Activated CD8-positive, alpha-beta T cell treated with anti-CD3 and anti-CD28 coated beads for 36 hours (primary cell): ENCODE measurements at regions of chr17 and their contacts with region 1.

Region 1: GRCh38 chr17:64648234-64648633 is 13.9 kb downstream of the SMURF2 start:
- DNase-seq: no peak
- ATAC-seq: no peak
- H3K4me3 Mint-ChIP-seq: no peak overlapping the region
- H3K27ac Mint-ChIP-seq: peak overlapping the region; percentile 75
- H3K4me1 Mint-ChIP-seq: peaks cover 42% of the 10 kb centered on the region
- H3K27me3 Mint-ChIP-seq: no peaks in the 10 kb centered on the region
- CTCF ChIP-seq: no peak

Region 2: DNA sequence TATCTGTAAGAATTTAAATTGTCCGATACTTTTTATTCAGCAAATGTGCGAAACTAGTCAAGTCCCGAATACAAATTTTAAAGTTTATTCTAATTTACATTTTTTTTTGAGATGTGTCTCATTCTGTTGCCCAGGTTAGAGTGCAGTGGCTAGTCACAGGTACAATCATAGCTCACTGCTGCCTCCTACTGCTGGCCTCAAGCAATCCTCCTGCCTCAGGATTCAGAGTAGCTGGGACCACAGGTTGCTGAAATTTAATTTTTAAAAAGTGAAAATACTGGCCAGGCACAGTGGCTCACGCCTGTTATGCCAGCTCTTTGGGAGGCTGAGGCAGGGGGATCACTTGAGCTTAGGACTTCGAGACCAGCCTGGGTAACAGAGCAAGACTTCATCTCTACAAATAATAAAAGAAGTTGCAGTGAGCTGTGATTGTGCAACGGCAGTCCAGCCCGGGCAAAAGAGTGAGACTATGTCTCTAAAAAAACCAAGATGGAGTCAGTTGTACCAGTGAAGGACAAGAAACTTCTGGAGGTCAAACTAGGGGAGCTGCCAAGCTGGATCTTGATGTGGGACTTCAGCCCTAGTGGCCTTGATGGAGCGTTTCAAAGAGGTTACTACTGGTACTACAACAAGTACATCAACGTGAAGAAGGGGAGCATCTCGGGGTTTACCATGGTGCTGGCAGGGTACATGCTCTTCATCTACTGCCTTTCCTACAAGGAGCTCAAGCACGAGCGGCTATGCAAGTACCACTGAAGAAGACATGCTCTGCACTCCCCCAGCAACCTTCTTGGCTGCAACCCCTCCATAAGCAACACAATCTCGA is 157.0 kb before region 1 on chr17:
- CTCF ChIA-PET with region 1: interaction called, 33 read pairs
- POLR2A ChIA-PET with region 1: interaction called, 3 read pairs
- intact Hi-C with region 1: no loop called
- DNase-seq: peak; percentile 72
- ATAC-seq: peak; percentile 82
- H3K4me3 Mint-ChIP-seq: no peak overlapping the region
- H3K27ac Mint-ChIP-seq: no peak overlapping the region
- H3K4me1 Mint-ChIP-seq: peaks cover 25% of the 10 kb centered on the region
- H3K27me3 Mint-ChIP-seq: no peaks in the 10 kb centered on the region
- CTCF ChIP-seq: peak; percentile 74

Region 3: GRCh38 chr17:64506576-64507477 is 141.4 kb before region 1 on chr17 and contains the start of gene CEP95:
- CTCF ChIA-PET with region 1: interaction called, 9 read pairs
- POLR2A ChIA-PET with region 1: interaction called, 35 read pairs
- intact Hi-C with region 1: no loop called
- DNase-seq: peak; percentile 98
- ATAC-seq: peak; percentile 70
- H3K4me3 Mint-ChIP-seq: peak within 1 kb of the TSS; percentile 91
- H3K27ac Mint-ChIP-seq: peak within 1 kb of the TSS; percentile 99
- H3K4me1 Mint-ChIP-seq: peaks cover 53% of the 10 kb centered on the region
- H3K27me3 Mint-ChIP-seq: no peaks in the 10 kb centered on the region
- CTCF ChIP-seq: no peak
- total RNA-seq, gene CEP95: 45.2 to 45.7 TPM

Region 4: GRCh38 chr17:64565563-64565962 is 82.7 kb before region 1 on chr17:
- CTCF ChIA-PET with region 1: interaction called, 24 read pairs
- POLR2A ChIA-PET with region 1: no interaction called
- intact Hi-C with region 1: loop called (anchors 10 kb)
- DNase-seq: no peak
- ATAC-seq: no peak
- H3K4me3 Mint-ChIP-seq: no peak overlapping the region
- H3K27ac Mint-ChIP-seq: no peak overlapping the region
- H3K4me1 Mint-ChIP-seq: peaks cover 3% of the 10 kb centered on the region
- H3K27me3 Mint-ChIP-seq: no peaks in the 10 kb centered on the region
- CTCF ChIP-seq: no peak

Region 5: GRCh38 chr17:64572638-64573154 is 75.5 kb before region 1 on chr17:
- CTCF ChIA-PET with region 1: interaction called, 24 read pairs
- POLR2A ChIA-PET with region 1: no interaction called
- intact Hi-C with region 1: loop called (anchors 10 kb)
- DNase-seq: peak; percentile 14
- ATAC-seq: peak; percentile 92
- H3K4me3 Mint-ChIP-seq: no peak overlapping the region
- H3K27ac Mint-ChIP-seq: peak overlapping the region; percentile 81
- H3K4me1 Mint-ChIP-seq: peaks cover 11% of the 10 kb centered on the region
- H3K27me3 Mint-ChIP-seq: no peaks in the 10 kb centered on the region
- CTCF ChIP-seq: no peak

Region 6: GRCh38 chr17:64599187-64599676 is 49.0 kb before region 1 on chr17:
- CTCF ChIA-PET with region 1: interaction called, 36 read pairs
- POLR2A ChIA-PET with region 1: interaction called, 3 read pairs
- intact Hi-C with region 1: no loop called
- DNase-seq: peak; percentile 75
- ATAC-seq: peak; percentile 99
- H3K4me3 Mint-ChIP-seq: peak overlapping the region; percentile 73
- H3K27ac Mint-ChIP-seq: peak overlapping the region; percentile 87
- H3K4me1 Mint-ChIP-seq: peaks cover 43% of the 10 kb centered on the region
- H3K27me3 Mint-ChIP-seq: no peaks in the 10 kb centered on the region
- CTCF ChIP-seq: no peak

Region 7: DNA sequence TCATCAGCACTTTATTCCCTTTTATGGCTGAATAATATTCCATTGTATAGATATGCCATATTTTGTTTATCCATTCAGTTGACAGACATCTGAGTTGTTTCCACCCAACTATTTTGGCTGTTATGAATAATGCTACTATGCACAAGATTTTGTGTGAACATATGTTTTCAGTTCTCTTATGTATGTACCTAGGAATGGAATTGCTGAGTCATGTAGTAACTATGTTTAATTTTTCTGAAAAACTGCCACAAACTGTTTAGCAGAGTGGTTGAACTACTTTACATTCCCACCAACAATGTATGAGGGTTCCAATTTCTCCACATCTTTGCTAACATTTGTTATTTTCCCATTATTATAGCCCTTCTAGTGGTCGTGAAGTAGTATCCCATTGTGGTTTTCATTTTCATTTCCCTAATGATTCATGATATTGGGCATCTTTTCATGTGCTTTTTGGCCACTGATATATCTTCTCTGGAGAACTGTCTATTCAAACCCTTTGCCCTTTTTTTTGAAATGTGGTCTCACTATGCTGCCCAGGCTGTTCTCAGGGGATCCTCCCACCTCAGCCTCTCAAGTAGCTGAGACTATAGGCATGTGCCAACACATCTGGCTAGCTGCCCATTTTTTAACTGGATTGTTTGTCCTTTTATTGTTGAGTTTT is 12.5 kb before region 1 on chr17:
- CTCF ChIA-PET with region 1: interaction called, 20 read pairs
- POLR2A ChIA-PET with region 1: interaction called, 4 read pairs
- intact Hi-C with region 1: no loop called
- DNase-seq: peak; percentile 45
- ATAC-seq: peak; percentile 69
- H3K4me3 Mint-ChIP-seq: peak overlapping the region; percentile 5
- H3K27ac Mint-ChIP-seq: peak overlapping the region; percentile 90
- H3K4me1 Mint-ChIP-seq: peaks cover 54% of the 10 kb centered on the region
- H3K27me3 Mint-ChIP-seq: no peaks in the 10 kb centered on the region
- CTCF ChIP-seq: no peak

Region 8: GRCh38 chr17:64682261-64683181 is 34.3 kb after region 1 on chr17:
- CTCF ChIA-PET with region 1: no interaction called
- POLR2A ChIA-PET with region 1: no interaction called
- intact Hi-C with region 1: no loop called
- DNase-seq: no peak
- ATAC-seq: no peak
- H3K4me3 Mint-ChIP-seq: no peak overlapping the region
- H3K27ac Mint-ChIP-seq: no peak overlapping the region
- H3K4me1 Mint-ChIP-seq: no peaks in the 10 kb centered on the region
- H3K27me3 Mint-ChIP-seq: no peaks in the 10 kb centered on the region
- CTCF ChIP-seq: no peak